AG04449 (cell line): ENCODE measurements at regions of chr11 and their contacts with region 1.

Region 1: DNA sequence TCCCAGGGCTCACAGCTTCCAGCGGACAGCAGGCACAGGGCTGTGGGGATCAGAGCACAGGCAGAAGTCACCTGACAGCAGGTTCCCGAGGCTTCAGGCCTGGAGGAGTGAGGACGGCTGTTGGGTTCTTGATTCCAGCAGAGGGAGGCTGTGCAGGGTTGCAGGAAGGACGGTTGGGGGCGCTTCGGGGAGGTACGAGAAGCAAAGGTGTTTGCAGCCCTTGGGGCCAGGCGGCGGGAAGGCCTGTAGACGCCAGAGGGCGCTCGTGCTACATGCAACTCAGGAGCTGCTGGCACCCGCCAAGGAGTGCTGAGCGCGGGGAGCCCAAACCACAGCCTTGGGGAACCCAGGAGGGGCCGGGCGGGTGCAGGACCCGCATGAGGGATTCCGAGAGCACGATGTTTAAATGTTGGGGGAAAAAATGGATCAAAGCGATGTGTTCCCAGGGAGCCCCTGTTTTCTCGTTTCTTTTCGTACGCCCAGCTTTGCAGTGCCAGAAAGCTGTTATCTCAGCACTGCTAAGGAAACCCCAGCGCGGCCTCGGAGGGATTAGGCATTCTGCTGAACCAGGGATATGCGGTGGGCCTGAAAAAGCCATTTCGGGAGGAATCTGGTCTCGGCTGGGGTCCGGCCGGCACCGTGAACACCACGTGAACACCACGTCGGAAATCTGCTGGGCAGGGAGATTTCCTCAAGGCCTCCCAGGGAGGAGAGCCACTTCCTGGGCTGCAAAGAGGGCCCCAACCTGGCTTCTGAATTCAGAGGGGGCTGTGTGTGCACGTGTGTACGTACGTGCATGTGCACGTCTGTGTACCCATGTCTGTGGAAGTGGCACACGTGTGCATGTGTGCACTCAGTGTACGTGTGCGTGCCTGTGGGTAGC is 88.1 kb downstream of the KCNQ1 start:
- DNase-seq: peak; percentile 28
- H3K4me3 ChIP-seq: peak overlapping the region; percentile 23
- CTCF ChIP-seq: peak; percentile 95

Region 2: DNA sequence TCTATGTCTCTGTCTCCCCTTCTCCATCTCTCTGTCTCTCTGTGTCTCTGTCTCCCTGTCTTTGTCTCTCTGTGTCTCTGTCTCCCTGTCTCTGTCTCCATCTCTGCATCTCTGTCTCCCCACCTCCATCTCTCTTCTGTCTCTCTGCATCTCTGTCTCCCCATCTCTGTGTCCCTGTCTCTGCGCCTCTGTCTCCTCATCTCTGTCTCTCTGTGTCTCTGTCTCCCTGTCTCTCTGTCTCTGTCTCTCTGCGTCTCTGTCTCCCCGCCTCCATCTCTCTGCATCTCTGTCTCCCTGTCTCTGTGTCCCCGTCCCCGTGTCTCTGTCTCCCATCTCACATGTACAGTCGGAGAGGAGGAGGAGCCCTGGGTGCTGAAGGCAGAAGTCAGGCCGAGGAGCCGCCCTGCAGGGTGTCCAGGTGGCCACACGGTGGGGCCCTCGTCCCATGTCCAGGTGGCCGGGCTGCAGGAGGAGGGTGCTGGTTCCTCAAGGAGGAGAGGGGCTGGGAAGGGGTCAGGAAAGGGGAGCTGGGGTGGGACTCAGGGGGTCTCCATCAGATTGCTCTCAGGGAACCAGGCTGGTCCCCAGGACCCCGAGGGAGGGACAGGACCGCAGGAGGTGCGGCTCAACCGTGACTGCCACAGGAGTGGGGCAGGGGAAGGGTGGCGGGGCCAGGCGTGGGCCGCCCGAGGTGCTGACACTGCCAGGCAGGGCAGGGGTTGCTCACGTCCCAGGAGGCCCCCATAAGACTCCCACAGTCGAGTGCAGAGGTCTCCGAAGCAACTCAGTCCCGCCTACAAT is 335.8 kb before region 1 on chr11:
- CTCF ChIA-PET with region 1: interaction called, 25 read pairs
- POLR2A ChIA-PET with region 1: no interaction called
- DNase-seq: no peak
- H3K4me3 ChIP-seq: no peak overlapping the region
- CTCF ChIP-seq: peak; percentile 98

Region 3: DNA sequence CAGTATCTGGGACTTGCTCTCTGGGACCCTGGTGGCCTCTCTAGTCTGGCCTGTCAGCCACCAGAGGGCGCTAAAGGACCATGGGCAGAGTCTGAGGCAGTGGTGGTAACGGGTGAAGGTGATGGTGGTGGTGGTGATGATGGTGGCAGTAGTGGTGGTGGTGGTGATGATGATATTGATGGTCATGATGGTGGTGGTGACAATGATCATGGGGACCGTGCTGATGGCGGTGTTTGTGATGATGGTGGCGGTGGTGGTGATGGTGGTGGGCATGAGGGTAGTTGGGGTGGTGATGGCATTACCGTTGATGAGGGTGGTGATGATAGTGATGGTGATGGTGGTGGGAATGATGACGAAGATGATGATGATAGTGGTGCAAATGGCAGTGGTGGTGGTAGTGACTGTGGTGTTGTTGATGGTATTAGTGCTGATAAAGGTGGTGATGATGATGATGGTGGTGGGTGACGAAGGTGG is 104.6 kb before region 1 on chr11:
- CTCF ChIA-PET with region 1: interaction called, 226 read pairs
- POLR2A ChIA-PET with region 1: no interaction called
- DNase-seq: no peak
- H3K4me3 ChIP-seq: no peak overlapping the region
- CTCF ChIP-seq: peak; percentile 77

Region 4: DNA sequence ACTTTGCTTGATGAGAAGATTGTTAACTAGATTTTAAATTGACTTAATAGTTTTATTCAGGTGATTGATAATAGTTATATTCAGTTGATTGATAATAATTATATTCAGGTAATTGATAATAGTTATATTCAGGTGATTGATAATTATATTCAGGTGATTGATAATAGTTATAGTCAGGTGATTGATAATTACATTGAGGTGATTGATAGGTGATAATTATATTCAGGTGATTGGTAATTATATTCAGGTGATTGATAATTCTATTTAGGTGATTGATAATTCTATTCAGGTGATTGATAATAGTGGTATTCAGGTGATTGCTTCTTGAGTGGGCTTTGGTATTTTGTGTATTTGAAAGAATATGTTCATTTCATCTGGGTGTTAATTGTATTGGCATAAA is 12.5 kb after region 1 on chr11:
- CTCF ChIA-PET with region 1: interaction called, 10 read pairs
- POLR2A ChIA-PET with region 1: no interaction called
- DNase-seq: no peak
- H3K4me3 ChIP-seq: no peak overlapping the region
- CTCF ChIP-seq: no peak

Region 5: DNA sequence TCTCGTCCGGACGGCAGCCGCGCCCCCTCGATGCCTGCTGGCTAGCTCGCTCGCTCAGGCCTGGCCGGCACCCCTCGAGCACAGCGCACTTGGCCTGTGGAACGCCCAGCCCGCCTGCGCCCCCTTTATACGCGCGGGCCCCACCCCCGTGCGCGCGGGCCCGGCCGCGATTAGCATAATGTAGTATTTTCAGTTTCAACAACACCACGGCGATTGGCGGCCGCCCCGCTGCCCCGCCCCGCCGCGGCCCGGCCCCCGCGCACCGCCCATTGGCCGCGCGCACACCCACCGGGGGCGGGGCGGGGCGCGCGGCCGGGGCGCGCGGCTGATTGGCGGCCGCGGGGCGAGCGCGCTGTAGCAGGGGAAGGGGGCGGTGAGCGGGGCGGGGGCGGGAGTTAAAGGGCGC is 352.7 kb after region 1 on chr11 and contains the start of gene CDKN1C:
- CTCF ChIA-PET with region 1: interaction called, 1,022 read pairs
- POLR2A ChIA-PET with region 1: interaction called, 9 read pairs
- DNase-seq: no peak
- H3K4me3 ChIP-seq: peak within 1 kb of the TSS; percentile 63
- CTCF ChIP-seq: no peak

Region 6: GRCh38 chr11:2912498-2912897 is 379.6 kb after region 1 on chr11:
- CTCF ChIA-PET with region 1: interaction called, 17 read pairs
- POLR2A ChIA-PET with region 1: no interaction called
- DNase-seq: peak; percentile 34
- H3K4me3 ChIP-seq: no peak overlapping the region
- CTCF ChIP-seq: no peak

Region 7: DNA sequence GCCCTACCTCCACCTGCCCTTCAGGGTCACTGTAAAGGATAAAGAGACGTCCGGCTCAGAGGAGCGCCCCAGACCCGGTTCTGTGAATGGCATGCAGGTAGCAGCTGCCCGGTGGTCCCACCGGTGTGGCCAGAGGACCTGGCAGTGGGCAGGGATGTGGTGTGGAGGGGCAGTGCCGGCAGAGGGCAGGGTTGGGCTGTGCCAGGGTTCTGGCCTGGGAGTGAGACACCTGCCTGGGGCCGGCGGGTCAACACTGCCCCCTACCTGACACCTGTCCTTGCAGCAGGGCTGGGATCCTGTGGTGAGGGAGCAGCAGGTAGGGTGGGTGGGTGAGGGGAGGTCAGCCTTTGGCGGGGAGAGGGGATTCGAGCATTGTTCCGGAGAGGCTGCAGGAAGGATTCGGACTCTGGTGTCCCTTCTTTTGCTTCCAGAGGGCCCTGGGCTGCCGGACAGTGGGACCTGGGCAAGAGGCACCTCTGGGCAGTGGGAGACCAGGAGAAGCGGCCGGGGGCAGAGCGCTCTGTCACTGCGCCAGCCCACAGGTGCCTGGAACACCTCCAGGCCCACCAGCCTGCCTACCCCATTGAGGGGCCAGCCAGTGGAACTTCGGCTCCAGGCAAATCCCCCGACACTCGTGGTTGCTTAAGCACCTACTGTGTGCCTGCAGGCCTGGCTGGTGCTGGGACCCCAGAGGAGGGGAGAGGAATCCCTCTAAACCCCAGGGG is 397.9 kb after region 1 on chr11:
- CTCF ChIA-PET with region 1: interaction called, 14 read pairs
- POLR2A ChIA-PET with region 1: no interaction called
- DNase-seq: no peak
- H3K4me3 ChIP-seq: peak overlapping the region; percentile 77
- CTCF ChIP-seq: peak; percentile 75